Ovary (tissue), 10 donors: ENCODE measurements at regions of chr2 and their contacts with region 1.

Region 1: GRCh38 chr2:46364797-46365457 is 67.7 kb downstream of the EPAS1 start:
- DNase-seq: peak in 1 of 5 donors; percentile 54
- H3K4me3 ChIP-seq: no peak overlapping the region
- H3K27ac ChIP-seq: no peak overlapping the region
- H3K4me1 ChIP-seq: no peaks in the 10 kb centered on the region
- H3K27me3 ChIP-seq: no peaks in the 10 kb centered on the region
- CTCF ChIP-seq: peak; percentile 59 to 72 (median 60)
- EP300 ChIP-seq: no peak
- POLR2A ChIP-seq: no peak

Region 2: DNA sequence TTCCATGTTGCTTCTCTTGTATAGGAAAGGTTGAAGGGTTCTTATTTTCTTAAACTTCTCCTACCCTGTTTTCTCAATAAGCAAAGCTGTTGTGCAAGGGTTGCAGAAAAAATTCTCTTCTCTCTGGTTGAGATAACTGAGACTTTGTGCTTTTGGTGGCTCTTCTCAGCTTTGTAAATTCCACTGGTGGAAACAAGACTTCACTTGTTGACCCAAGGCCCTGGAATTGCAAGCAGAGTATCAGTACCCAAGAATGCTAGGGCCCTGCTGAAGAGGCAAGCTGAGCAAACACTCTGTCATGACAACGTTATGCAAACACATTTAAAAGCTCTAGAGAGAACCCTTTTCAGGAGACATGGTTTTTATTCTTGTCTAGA is 362.4 kb before region 1 on chr2:
- intact Hi-C with region 1: loop called in 1 of 4 experiments (anchors 10 kb)
- DNase-seq: peak in 1 of 5 donors; percentile 22
- H3K4me3 ChIP-seq: no peak overlapping the region
- H3K27ac ChIP-seq: peak overlapping the region in 1 of 2 donors; percentile 56
- H3K4me1 ChIP-seq: peaks cover 14% of the 10 kb centered on the region
- H3K27me3 ChIP-seq: no peaks in the 10 kb centered on the region
- CTCF ChIP-seq: no peak
- EP300 ChIP-seq: no peak
- POLR2A ChIP-seq: no peak

Region 3: GRCh38 chr2:46010925-46011490 is 353.9 kb before region 1 on chr2:
- intact Hi-C with region 1: loop called in 3 of 4 experiments (anchors 5 to 10 kb)
- DNase-seq: no peak
- H3K4me3 ChIP-seq: no peak overlapping the region
- H3K27ac ChIP-seq: no peak overlapping the region
- H3K4me1 ChIP-seq: no peaks in the 10 kb centered on the region
- H3K27me3 ChIP-seq: no peaks in the 10 kb centered on the region
- CTCF ChIP-seq: peak; percentile 48 to 60 (median 54)
- EP300 ChIP-seq: no peak
- POLR2A ChIP-seq: no peak

Region 4: GRCh38 chr2:46062637-46063412 is 302.1 kb before region 1 on chr2:
- intact Hi-C with region 1: loop called in 3 of 4 experiments (anchors 5 kb)
- DNase-seq: peak; percentile 72 to 90 (median 77)
- H3K4me3 ChIP-seq: no peak overlapping the region
- H3K27ac ChIP-seq: no peak overlapping the region
- H3K4me1 ChIP-seq: peaks cover 1% of the 10 kb centered on the region
- H3K27me3 ChIP-seq: no peaks in the 10 kb centered on the region
- CTCF ChIP-seq: peak; percentile 75 to 88 (median 77)
- EP300 ChIP-seq: no peak
- POLR2A ChIP-seq: no peak

Region 5: DNA sequence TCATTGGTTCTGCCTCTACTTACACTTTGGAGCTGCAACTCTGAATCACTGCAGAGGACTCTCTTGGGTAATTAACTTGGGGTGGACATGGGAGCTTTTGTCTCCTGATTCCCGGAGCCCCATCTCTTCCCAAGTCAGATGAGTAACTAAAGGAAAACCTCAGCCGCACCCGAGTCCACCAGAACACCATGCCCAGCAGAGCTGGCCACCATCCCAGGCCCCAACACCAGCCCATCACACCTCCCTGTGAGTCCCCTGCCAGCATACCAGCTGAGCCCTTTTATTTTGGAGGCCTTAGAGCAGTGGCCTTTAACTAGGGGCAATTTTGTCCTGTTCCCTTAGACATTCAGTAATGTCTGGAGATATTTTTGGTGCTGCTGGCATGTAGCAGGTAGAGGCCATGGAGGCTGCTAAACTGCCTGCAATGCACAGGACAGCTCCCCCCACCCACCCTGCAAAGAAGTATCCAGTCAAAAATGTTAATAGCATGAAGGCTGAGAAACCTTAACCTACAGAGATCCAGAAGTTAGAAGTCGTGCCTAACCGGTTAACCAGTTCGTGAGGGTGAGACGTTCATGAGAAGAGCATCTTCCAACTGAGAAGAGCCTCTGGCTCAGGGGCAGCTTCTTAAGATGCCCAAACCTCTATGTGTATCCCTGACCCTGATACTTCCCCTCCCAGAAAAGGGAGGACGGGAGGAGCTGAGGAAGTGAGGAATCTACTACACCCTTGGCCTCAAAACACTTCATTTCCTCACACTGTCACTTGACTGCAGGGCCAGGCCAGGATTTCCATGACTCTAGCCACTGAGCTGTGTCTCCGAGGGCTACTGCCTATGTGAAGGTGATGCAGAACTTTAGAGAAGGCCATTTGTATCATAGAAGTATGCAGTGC is 207.6 kb before region 1 on chr2:
- intact Hi-C with region 1: no loop called
- DNase-seq: no peak
- H3K4me3 ChIP-seq: no peak overlapping the region
- H3K27ac ChIP-seq: no peak overlapping the region
- H3K4me1 ChIP-seq: no peaks in the 10 kb centered on the region
- H3K27me3 ChIP-seq: no peaks in the 10 kb centered on the region
- CTCF ChIP-seq: no peak
- EP300 ChIP-seq: no peak
- POLR2A ChIP-seq: no peak

Region 6: DNA sequence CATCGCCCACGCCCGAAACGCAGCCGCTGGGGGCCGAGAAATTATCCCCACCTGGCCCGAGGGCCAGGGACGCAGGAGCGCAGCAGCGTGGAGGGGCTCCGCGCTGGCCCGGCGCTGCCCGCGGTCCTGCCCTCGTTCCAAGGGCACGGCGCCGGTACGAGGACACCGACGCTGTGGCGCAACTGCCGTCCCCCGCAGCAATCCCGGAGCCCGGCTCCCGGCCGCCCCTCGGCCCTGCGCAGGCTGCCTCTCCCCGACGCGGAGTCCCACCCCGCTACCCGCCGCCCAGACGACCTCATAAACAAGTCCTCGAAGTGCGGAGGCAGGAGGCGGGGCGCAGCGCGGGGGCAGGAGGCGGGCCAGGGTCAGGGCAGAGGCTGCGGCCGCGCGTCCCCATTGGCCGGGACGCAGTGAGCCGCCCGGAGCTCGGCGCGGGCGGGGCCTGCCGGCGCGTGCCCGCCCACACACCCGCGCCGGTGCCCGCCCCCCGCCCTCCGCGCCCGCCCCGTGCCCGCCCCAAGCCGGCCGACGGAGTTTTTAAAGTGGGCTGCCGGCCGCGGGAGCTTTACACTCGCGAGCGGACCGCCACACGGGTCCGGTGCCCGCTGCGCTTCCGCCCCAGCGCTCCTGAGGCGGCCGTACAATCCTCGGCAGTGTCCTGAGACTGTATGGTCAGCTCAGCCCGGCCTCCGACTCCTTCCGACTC is 67.9 kb before region 1 on chr2 and contains the start of gene EPAS1:
- intact Hi-C with region 1: loop called in 1 of 4 experiments (anchors 5 kb)
- DNase-seq: peak; percentile 88 to 95 (median 94)
- H3K4me3 ChIP-seq: peak within 1 kb of the TSS; percentile 73
- H3K27ac ChIP-seq: peak within 1 kb of the TSS; percentile 80 to 92
- H3K4me1 ChIP-seq: peaks cover 6% of the 10 kb centered on the region
- H3K27me3 ChIP-seq: no peaks in the 10 kb centered on the region
- CTCF ChIP-seq: no peak
- EP300 ChIP-seq: no peak
- POLR2A ChIP-seq: peak; percentile 63
- total RNA-seq, gene EPAS1: 63.1 to 163 (median 81.0) TPM

Region 7: GRCh38 chr2:46434851-46435273 is 69.9 kb after region 1 on chr2:
- intact Hi-C with region 1: no loop called
- DNase-seq: no peak
- H3K4me3 ChIP-seq: no peak overlapping the region
- H3K27ac ChIP-seq: no peak overlapping the region
- H3K4me1 ChIP-seq: no peaks in the 10 kb centered on the region
- H3K27me3 ChIP-seq: no peaks in the 10 kb centered on the region
- CTCF ChIP-seq: no peak
- EP300 ChIP-seq: no peak
- POLR2A ChIP-seq: no peak

Region 8: DNA sequence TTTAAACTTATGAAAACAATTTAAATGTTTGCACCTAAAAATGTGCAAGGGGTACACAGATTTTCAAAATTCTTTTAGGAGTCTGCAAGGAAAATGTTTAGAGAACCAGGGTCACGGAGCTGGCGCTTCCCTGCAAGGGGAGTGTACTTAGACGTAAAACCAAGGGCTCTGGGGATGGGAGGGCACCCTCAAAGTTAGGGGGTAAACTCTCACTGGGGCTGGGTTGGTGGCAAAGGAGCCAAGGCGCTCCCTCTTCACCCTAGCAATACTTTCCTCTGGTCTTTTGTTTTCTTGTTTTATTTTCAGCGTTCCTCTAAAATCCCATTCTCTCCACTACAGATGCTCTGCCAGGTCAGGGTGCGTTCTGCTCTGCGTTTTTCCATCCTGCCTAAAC is 134.5 kb after region 1 on chr2:
- intact Hi-C with region 1: no loop called
- DNase-seq: no peak
- H3K4me3 ChIP-seq: peak overlapping the region; percentile 50
- H3K27ac ChIP-seq: peak overlapping the region in 1 of 2 donors; percentile 71
- H3K4me1 ChIP-seq: no peaks in the 10 kb centered on the region
- H3K27me3 ChIP-seq: no peaks in the 10 kb centered on the region
- CTCF ChIP-seq: no peak
- EP300 ChIP-seq: no peak
- POLR2A ChIP-seq: no peak

Region 9: GRCh38 chr2:46540496-46541331 is 175.8 kb after region 1 on chr2:
- intact Hi-C with region 1: no loop called
- DNase-seq: no peak
- H3K4me3 ChIP-seq: peak overlapping the region; percentile 2
- H3K27ac ChIP-seq: peak overlapping the region; percentile 89 to 98
- H3K4me1 ChIP-seq: peaks cover 2% of the 10 kb centered on the region
- H3K27me3 ChIP-seq: no peaks in the 10 kb centered on the region
- CTCF ChIP-seq: no peak
- EP300 ChIP-seq: no peak
- POLR2A ChIP-seq: no peak